RWPE1 (cell line): ENCODE measurements at regions of chr10 and their contacts with region 1.

Region 1: DNA sequence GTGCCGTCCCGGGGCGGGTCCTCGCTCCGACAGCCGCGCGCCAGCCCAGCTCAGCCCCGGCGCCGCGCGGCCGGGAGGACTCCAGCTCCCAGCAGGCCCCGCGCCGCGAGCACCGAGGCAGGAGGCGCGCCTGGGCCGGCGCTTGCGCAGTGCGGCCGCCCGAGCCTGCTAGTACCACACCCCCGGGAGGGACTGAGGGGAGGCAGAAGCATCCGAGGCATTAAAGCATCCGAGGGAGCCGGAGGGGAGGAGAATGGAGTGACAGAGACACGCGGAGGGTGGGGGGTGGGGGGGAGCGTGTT is at the start of gene GRK5:
- DNase-seq: peak; percentile 98
- H3K27ac ChIP-seq: peak within 1 kb of the TSS; percentile 91
- CTCF ChIP-seq: no peak

Region 2: GRCh38 chr10:119221201-119221600 is 13.9 kb after region 1 on chr10:
- CTCF ChIA-PET with region 1: interaction called, 11 read pairs
- POLR2A ChIA-PET with region 1: no interaction called
- DNase-seq: no peak
- H3K27ac ChIP-seq: no peak overlapping the region
- CTCF ChIP-seq: no peak

Region 3: DNA sequence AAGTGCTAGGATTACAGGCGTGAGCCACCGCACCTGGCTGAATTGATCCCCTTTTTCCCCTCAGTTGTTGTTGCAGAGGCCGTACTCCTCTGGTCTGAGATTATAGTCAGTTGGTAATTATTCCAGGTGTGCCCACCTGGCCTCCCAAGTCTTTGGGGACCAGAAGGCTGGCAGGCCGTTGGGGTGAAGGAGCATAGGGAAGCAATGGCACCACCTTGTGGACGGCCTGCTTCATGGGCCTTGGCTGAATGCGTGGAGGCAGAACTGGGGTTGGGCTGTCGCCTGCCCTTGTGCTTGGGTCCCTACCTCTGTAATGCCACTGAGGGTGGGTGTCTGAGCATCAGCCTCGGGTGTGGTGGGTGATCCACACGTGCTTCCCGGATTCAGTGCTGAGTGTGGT is 209.5 kb after region 1 on chr10:
- CTCF ChIA-PET with region 1: interaction called, 27 read pairs
- POLR2A ChIA-PET with region 1: interaction called, 3 read pairs
- DNase-seq: peak; percentile 87
- H3K27ac ChIP-seq: no peak overlapping the region
- CTCF ChIP-seq: peak; percentile 71

Region 4: GRCh38 chr10:119489991-119490326 is 282.6 kb after region 1 on chr10:
- CTCF ChIA-PET with region 1: interaction called, 15 read pairs
- POLR2A ChIA-PET with region 1: interaction called, 3 read pairs
- DNase-seq: no peak
- H3K27ac ChIP-seq: no peak overlapping the region
- CTCF ChIP-seq: peak; percentile 15; the same call in 1 of the 2 replicates